MCF 10A (cell line): ENCODE measurements at regions of chr10 and their contacts with region 1.

Region 1: GRCh38 chr10:97612386-97612785 is 20.9 kb downstream of the MORN4 start:
- DNase-seq: peak; percentile 74
- H3K4me3 Mint-ChIP-seq: no peak overlapping the region
- H3K27ac Mint-ChIP-seq: no peak overlapping the region
- H3K4me1 Mint-ChIP-seq: peaks cover 12% of the 10 kb centered on the region
- H3K27me3 Mint-ChIP-seq: no peaks in the 10 kb centered on the region
- CTCF ChIP-seq: peak; percentile 48

Region 2: GRCh38 chr10:97355571-97355975 is 256.8 kb before region 1 on chr10:
- CTCF ChIA-PET with region 1: no interaction called
- POLR2A ChIA-PET with region 1: no interaction called
- intact Hi-C with region 1: no loop called
- DNase-seq: peak; percentile 27
- H3K4me3 Mint-ChIP-seq: no peak overlapping the region
- H3K27ac Mint-ChIP-seq: no peak overlapping the region
- H3K4me1 Mint-ChIP-seq: no peaks in the 10 kb centered on the region
- H3K27me3 Mint-ChIP-seq: no peaks in the 10 kb centered on the region
- CTCF ChIP-seq: no peak

Region 3: GRCh38 chr10:97454330-97455036 is 157.9 kb before region 1 on chr10:
- CTCF ChIA-PET with region 1: interaction called, 204 read pairs
- POLR2A ChIA-PET with region 1: interaction called, 6 read pairs
- intact Hi-C with region 1: no loop called
- DNase-seq: peak; percentile 51
- H3K4me3 Mint-ChIP-seq: no peak overlapping the region
- H3K27ac Mint-ChIP-seq: no peak overlapping the region
- H3K4me1 Mint-ChIP-seq: peaks cover 8% of the 10 kb centered on the region
- H3K27me3 Mint-ChIP-seq: no peaks in the 10 kb centered on the region
- CTCF ChIP-seq: no peak

Region 4: DNA sequence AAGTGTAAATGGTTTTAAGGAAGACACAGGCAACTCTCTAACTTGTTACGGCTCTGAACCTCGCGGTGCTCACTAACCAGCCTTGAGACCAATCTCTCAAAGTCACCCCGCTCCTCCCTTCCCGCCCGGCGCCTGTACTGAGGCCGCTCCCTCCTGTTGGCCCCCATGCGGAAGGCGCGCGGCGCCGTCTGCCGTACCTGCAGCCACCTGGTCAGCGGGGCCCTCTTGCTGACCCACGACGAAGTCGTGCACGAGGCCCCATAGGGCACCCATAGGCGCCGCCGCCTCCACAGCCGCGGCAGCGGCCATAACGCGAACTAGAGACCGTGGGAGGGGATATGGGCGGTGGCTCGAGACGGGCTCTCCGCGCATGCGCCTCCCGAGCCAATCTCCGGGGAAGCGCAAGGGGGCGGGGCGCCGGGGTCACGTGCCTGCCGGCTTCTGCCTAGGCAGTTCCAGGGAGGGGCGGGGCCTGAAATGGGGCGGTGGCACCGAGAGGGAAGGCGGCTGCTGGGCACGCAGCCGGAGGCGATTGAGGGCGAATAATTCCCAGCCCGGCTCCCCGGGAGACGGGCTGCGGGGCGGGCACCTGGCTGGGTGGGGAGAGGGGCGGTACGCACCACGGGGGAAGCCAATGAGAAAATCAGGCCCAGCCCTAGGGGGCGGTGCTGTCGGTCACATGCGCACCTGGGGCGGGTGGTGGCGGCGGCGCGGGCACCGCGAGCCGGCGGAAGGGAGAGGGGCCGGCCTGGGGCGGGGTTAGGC is 114.1 kb before region 1 on chr10 and contains the start of gene MMS19:
- CTCF ChIA-PET with region 1: interaction called, 10 read pairs
- POLR2A ChIA-PET with region 1: interaction called, 10 read pairs
- intact Hi-C with region 1: no loop called
- DNase-seq: peak; percentile 98
- H3K4me3 Mint-ChIP-seq: peak within 1 kb of the TSS; percentile 88
- H3K27ac Mint-ChIP-seq: peak within 1 kb of the TSS; percentile 91
- H3K4me1 Mint-ChIP-seq: peaks cover 29% of the 10 kb centered on the region
- H3K27me3 Mint-ChIP-seq: no peaks in the 10 kb centered on the region
- CTCF ChIP-seq: no peak
- total RNA-seq, gene MMS19: 67.0 and 67.2 TPM in 2 replicates

Region 5: DNA sequence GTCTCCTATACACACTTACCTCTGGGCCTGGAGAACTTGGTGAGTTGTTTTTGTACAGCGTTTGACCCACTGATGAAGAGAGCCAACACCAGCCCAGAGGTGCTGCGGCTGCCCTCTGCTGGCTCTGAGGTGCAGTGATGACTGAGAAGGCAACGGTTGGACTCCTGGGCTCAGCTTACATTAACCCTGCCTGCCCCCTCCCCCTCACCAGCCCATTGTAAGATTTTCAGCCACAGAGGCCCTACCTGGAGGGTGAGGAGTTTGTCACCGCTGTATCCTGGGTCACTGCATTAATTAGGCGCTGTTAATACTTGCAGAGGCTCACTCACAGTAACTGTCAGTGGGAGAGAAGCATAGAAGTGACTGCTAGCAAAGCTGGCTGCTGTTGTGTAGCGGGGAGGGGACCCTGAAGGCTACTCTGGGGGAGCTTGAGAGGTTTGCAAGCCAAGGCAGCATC is 58.8 kb before region 1 on chr10:
- CTCF ChIA-PET with region 1: interaction called, 95 read pairs
- POLR2A ChIA-PET with region 1: interaction called, 7 read pairs
- intact Hi-C with region 1: loop called (anchors 1 kb)
- DNase-seq: peak; percentile 78
- H3K4me3 Mint-ChIP-seq: no peak overlapping the region
- H3K27ac Mint-ChIP-seq: peak overlapping the region; percentile 46
- H3K4me1 Mint-ChIP-seq: peaks cover 28% of the 10 kb centered on the region
- H3K27me3 Mint-ChIP-seq: no peaks in the 10 kb centered on the region
- CTCF ChIP-seq: peak; percentile 88

Region 6: DNA sequence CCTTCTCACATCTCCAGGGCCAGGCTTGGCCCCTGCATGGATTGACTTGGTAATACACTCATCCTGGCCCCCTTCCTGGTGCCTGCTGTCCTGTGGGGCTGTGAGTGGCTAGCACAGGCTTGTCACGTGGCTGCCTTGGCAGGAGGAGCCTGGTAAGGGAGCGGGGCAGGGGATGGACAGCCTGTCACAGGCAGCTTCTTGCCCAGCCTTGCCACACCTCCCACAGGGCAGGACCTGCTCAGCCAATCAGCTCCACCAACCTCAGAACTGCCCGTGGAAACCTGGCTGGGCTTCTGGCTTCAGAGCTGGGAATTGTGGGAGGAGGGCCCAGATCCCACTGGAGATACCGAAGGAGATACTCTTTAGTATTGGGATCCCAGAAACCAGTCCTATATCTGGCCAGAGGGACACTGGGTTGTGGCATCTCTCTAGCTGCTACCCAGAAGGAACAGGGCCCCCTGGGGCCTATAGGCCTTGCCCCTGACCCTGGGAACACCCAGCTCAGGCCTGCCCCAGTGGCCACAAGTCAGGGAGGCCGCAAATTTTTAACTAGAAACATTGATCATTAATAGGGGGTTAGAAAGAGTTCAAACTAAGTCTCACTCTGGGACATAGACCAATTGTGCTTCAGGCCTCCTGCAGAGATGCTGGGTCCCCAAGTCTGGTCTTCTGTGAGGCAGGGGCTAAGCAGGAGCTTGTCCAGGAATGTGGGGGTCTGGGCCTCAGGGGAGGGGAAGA is 28.2 kb before region 1 on chr10 and contains the start of gene HOGA1:
- CTCF ChIA-PET with region 1: interaction called, 23 read pairs
- POLR2A ChIA-PET with region 1: interaction called, 10 read pairs
- intact Hi-C with region 1: no loop called
- DNase-seq: peak; percentile 85
- H3K4me3 Mint-ChIP-seq: peak within 1 kb of the TSS; percentile 35
- H3K27ac Mint-ChIP-seq: peak within 1 kb of the TSS; percentile 78
- H3K4me1 Mint-ChIP-seq: peaks cover 22% of the 10 kb centered on the region
- H3K27me3 Mint-ChIP-seq: no peaks in the 10 kb centered on the region
- CTCF ChIP-seq: no peak
- total RNA-seq, gene HOGA1: 0.88 and 1.7 TPM in 2 replicates

Region 7: DNA sequence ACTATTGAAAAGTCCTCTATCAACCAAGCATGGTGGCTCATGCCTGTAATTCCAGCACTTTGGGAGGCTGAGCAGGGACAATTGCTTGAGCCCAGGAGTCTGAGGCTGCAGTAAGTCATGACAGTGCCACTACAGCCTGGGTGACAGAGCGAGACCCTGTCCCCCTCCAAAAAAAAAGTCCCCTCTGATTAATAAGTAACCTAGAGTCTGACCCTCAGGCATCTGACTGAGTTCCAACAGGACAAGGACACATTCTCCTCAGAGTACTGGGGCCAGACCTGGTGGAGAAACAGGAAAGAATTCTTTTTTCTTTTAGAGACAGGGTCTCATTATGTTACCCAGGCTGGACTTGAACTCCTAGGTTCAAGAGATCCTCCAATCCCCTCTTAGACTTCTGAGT is 10.9 kb after region 1 on chr10:
- CTCF ChIA-PET with region 1: interaction called, 38 read pairs
- POLR2A ChIA-PET with region 1: interaction called, 4 read pairs
- intact Hi-C with region 1: no loop called
- DNase-seq: no peak
- H3K4me3 Mint-ChIP-seq: no peak overlapping the region
- H3K27ac Mint-ChIP-seq: no peak overlapping the region
- H3K4me1 Mint-ChIP-seq: no peaks in the 10 kb centered on the region
- H3K27me3 Mint-ChIP-seq: no peaks in the 10 kb centered on the region
- CTCF ChIP-seq: no peak

Region 8: DNA sequence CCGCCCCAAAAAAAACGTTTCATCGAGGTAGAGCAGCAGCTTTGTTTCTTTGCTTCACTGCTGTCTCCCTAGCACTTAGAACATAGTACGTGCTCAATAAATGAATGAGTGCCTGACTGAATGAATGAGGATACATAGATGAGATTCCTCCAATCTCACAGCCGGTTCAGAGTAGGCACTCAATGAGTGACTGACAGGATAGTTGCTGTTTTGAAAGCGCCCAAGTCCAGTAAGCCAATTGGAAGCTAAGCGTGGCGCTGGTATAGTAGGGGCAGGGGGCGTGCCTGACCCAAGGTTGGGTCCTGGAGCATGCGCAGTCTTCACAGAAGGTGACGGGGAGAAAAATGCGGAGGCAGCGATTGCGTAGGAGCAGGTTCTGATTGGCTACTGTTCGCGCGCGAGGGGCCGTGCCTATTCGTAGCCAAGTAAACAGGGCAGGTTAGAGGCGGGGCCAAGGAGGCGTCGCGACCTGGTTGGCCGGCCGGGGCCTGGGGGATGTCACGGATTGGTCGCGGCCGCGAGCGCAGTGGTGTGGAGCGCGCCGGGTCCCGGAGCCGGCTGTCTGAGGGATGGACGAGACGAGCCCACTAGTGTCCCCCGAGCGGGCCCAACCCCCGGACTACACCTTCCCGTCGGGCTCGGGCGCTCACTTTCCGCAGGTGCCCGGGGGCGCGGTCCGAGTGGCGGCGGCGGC is 27.9 kb after region 1 on chr10 and contains the start of gene PI4K2A:
- CTCF ChIA-PET with region 1: interaction called, 3 read pairs
- POLR2A ChIA-PET with region 1: interaction called, 10 read pairs
- intact Hi-C with region 1: no loop called
- DNase-seq: peak; percentile 99
- H3K4me3 Mint-ChIP-seq: peak within 1 kb of the TSS; percentile 87
- H3K27ac Mint-ChIP-seq: peak within 1 kb of the TSS; percentile 10
- H3K4me1 Mint-ChIP-seq: peaks cover 15% of the 10 kb centered on the region
- H3K27me3 Mint-ChIP-seq: no peaks in the 10 kb centered on the region
- CTCF ChIP-seq: no peak
- total RNA-seq, gene PI4K2A: 23.5 and 26.6 TPM in 2 replicates